Activated CD4-positive, alpha-beta T cell treated with anti-CD3 and anti-CD28 coated beads for 36 hours (primary cell): ENCODE measurements at regions of chr15 and their contacts with region 1.

Region 1: GRCh38 chr15:81265944-81266775 is 57.8 kb downstream of the STARD5 start:
- DNase-seq: peak; percentile 92
- ATAC-seq: peak; percentile 93
- H3K4me3 Mint-ChIP-seq: peak overlapping the region; percentile 53
- H3K27ac Mint-ChIP-seq: peak overlapping the region; percentile 75
- H3K4me1 Mint-ChIP-seq: peaks cover 37% of the 10 kb centered on the region
- H3K27me3 Mint-ChIP-seq: peaks cover 2% of the 10 kb centered on the region

Region 2: GRCh38 chr15:80455668-80456442 is 810.3 kb before region 1 on chr15:
- CTCF ChIA-PET with region 1: interaction called, 5 read pairs
- POLR2A ChIA-PET with region 1: no interaction called
- intact Hi-C with region 1: loop called (anchors 1 to 2 kb)
- DNase-seq: peak; percentile 74
- ATAC-seq: peak; percentile 73
- H3K4me3 Mint-ChIP-seq: no peak overlapping the region
- H3K27ac Mint-ChIP-seq: no peak overlapping the region
- H3K4me1 Mint-ChIP-seq: no peaks in the 10 kb centered on the region
- H3K27me3 Mint-ChIP-seq: peaks cover 9% of the 10 kb centered on the region

Region 3: GRCh38 chr15:81106560-81106959 is 159.6 kb before region 1 on chr15:
- CTCF ChIA-PET with region 1: interaction called, 184 read pairs
- POLR2A ChIA-PET with region 1: interaction called, 6 read pairs
- intact Hi-C with region 1: loop called (anchors 1 kb)
- DNase-seq: peak; percentile 59
- ATAC-seq: peak; percentile 57
- H3K4me3 Mint-ChIP-seq: no peak overlapping the region
- H3K27ac Mint-ChIP-seq: no peak overlapping the region
- H3K4me1 Mint-ChIP-seq: peaks cover 4% of the 10 kb centered on the region
- H3K27me3 Mint-ChIP-seq: peaks cover 18% of the 10 kb centered on the region

Region 4: GRCh38 chr15:81163961-81164800 is 102.0 kb before region 1 on chr15:
- CTCF ChIA-PET with region 1: interaction called, 10 read pairs
- POLR2A ChIA-PET with region 1: no interaction called
- intact Hi-C with region 1: no loop called
- DNase-seq: no peak
- ATAC-seq: no peak
- H3K4me3 Mint-ChIP-seq: no peak overlapping the region
- H3K27ac Mint-ChIP-seq: no peak overlapping the region
- H3K4me1 Mint-ChIP-seq: peaks cover 19% of the 10 kb centered on the region
- H3K27me3 Mint-ChIP-seq: peaks cover 9% of the 10 kb centered on the region

Region 5: DNA sequence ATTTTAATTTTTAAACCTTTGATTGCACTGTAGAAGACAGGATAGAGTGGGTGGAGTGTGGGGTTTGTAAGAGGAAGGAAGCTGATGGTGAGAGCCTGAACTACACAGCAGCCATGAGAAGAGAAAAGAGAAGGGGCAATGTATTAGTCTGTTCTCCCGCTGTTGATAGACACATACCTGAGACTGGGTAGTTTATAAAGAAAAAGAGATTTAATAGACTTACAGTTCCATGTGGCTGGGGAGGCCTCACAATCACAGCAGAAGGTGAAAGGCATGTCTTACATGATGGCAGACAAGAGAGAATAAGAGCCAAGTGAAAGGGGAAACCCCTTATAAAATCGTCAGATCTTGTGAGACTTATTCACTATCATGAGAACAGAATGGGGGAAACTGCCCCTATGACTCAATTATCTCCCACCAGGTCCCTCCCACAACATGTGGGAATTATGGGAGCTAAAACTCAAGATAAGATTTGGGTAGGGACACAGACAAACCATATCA is 20.5 kb after region 1 on chr15:
- CTCF ChIA-PET with region 1: interaction called, 35 read pairs
- POLR2A ChIA-PET with region 1: no interaction called
- intact Hi-C with region 1: no loop called
- DNase-seq: no peak
- ATAC-seq: peak; percentile 83
- H3K4me3 Mint-ChIP-seq: peak overlapping the region; percentile 71
- H3K27ac Mint-ChIP-seq: peak overlapping the region; percentile 97
- H3K4me1 Mint-ChIP-seq: peaks cover 77% of the 10 kb centered on the region
- H3K27me3 Mint-ChIP-seq: no peaks in the 10 kb centered on the region

Region 6: GRCh38 chr15:81323944-81324881 is 58.1 kb after region 1 on chr15 and contains the start of gene STARD5:
- CTCF ChIA-PET with region 1: interaction called, 23 read pairs
- POLR2A ChIA-PET with region 1: no interaction called
- intact Hi-C with region 1: no loop called
- DNase-seq: peak; percentile 98
- ATAC-seq: peak; percentile 99
- H3K4me3 Mint-ChIP-seq: peak within 1 kb of the TSS; percentile 95
- H3K27ac Mint-ChIP-seq: peak within 1 kb of the TSS; percentile 90
- H3K4me1 Mint-ChIP-seq: peaks cover 27% of the 10 kb centered on the region
- H3K27me3 Mint-ChIP-seq: no peaks in the 10 kb centered on the region
- total RNA-seq, gene STARD5: 8.9 to 9.2 TPM

Region 7: GRCh38 chr15:81379269-81379668 is 113.1 kb after region 1 on chr15:
- CTCF ChIA-PET with region 1: interaction called, 10 read pairs
- POLR2A ChIA-PET with region 1: no interaction called
- intact Hi-C with region 1: no loop called
- DNase-seq: no peak
- ATAC-seq: no peak
- H3K4me3 Mint-ChIP-seq: no peak overlapping the region
- H3K27ac Mint-ChIP-seq: no peak overlapping the region
- H3K4me1 Mint-ChIP-seq: peaks cover 4% of the 10 kb centered on the region
- H3K27me3 Mint-ChIP-seq: no peaks in the 10 kb centered on the region